ENCODE measurements at regions of chr4 and their contacts with region 1.

Region 1: DNA sequence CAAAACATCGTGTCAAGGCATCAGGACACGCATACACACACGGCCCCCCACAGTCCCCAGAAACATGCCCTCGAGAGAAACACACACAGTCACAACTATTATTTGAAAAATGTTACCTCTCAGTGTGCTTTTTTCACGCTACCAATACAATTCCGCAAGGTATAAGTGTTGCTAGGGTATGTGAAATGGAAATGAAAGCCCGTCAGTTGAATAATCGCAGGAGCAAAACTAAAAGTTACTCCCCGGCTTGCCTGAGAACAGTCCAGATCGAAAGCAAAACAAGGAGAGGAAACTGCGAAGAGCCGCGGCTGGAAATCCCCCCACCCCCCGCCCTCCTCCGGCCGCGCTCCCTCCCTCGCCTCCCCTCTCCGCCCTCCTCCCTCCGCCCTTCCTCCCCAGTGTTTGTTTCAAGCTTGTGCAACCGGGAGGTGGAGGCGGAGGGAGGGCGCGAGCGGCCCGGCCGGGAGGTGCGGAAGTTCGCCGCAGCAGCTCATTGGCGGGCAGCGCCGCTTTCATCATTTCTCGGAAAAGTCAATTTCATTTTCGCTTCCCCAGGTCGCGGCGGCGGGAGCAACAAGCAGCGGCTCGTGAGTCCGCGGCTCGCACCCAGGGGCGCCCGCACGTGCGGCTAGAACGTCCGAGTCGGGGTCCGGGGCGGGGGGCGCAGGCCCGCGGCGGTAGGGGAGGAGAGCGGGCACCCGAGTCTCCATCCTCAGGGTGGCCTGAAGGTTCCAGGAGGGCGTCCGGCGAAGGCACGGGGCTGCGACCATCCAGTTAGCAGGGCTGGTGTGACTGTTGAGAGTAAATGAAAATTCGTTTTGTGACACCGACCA is at the start of gene IRF2:
- DNase-seq: peak; percentile 97
- H3K4me3 ChIP-seq: peak within 1 kb of the TSS; percentile 89
- H3K27ac ChIP-seq: peak within 1 kb of the TSS; percentile 89
- H3K4me1 ChIP-seq: peaks cover 55% of the 10 kb centered on the region
- CTCF ChIP-seq: no peak; the same call in 1 of the 2 replicates
- total RNA-seq, gene IRF2: 29.7 and 32.3 TPM in 2 replicates

Region 2: DNA sequence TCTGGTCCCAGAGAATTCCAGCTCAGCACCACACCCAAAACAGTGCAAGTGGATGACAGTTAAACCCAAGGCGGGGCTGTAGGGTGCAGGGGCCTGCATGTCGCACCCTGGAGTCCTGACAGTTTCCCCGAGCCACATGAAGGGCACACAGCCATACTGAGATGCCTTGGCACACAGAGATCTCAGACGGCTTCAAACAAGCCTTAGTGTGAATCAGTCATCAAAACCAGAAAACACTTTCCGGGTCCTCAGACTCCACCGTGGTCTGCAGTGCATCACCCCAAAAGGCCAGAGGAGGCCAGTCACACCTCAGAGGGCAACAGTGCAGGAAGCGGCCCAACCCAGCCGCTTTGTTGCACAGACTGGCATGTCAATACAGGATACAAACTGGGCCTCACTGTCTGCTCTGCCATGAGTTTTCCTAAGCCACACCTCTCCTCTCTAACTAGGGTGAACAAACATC is 192.2 kb before region 1 on chr4:
- CTCF ChIA-PET with region 1: interaction called, 3 read pairs
- POLR2A ChIA-PET with region 1: interaction called, 12 read pairs
- intact Hi-C with region 1: loop called (anchors 1 kb)
- DNase-seq: peak; percentile 87
- H3K4me3 ChIP-seq: peak overlapping the region; percentile 50
- H3K27ac ChIP-seq: peak overlapping the region; percentile 96
- H3K4me1 ChIP-seq: peaks cover 80% of the 10 kb centered on the region
- CTCF ChIP-seq: peak; percentile 66

Region 3: DNA sequence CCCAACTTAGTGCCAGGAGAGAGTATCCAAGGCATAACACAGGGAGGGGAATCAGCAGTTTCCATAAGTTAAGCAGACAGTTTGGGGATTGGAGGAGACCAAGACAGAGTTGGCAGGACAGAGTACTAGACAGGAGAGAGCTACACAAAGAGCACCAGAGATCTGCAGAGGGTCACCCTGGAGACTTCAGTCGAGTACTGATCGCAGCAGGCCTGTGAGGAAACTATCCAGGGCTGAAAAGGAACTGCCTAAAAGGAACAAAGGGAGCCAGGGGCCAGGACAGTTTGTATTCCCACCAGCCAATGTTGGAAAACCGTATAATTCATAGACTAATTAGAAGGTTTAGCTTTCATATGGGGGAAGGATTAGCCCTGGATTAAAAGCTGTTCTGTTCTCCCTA is 176.2 kb before region 1 on chr4:
- CTCF ChIA-PET with region 1: no interaction called
- POLR2A ChIA-PET with region 1: no interaction called
- intact Hi-C with region 1: no loop called
- DNase-seq: no peak
- H3K4me3 ChIP-seq: no peak overlapping the region
- H3K27ac ChIP-seq: no peak overlapping the region
- H3K4me1 ChIP-seq: peaks cover 5% of the 10 kb centered on the region
- CTCF ChIP-seq: no peak

Region 4: DNA sequence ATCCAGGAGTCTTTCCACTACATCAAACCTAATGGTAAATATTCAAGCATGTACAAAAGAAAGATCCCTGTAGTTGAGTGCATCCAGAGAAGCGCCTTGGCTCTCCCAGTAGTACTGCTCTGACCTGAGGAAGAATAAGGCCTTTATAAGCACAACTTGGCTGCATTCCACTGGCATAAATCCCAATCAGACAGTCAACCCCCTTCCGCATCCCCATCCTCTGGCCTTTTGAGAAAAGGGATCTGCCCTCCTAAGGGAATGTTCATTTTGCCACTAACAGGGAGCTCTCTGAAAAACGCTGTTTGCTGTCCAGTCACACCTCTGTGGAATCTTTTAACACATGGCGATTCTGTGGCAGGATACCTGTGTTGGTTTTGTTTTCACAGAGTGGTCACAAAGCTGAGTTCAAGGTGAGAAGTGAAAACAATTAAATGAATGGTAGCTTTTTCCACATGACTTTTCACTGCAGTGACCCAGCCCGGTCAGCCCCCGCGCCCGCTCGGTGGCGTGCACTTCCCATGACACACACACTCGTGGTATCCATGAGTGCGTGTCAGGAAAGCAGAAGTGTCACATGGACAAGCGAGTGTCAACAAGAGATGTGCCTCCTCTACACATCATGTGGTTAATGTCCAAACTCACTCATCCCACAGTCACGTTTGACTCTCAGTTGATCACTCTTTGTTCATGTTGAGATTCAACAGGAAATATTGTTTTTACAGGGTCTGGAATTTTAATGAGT is 144.6 kb before region 1 on chr4:
- CTCF ChIA-PET with region 1: no interaction called
- POLR2A ChIA-PET with region 1: interaction called, 6 read pairs
- intact Hi-C with region 1: loop called (anchors 1 kb)
- DNase-seq: no peak
- H3K4me3 ChIP-seq: no peak overlapping the region
- H3K27ac ChIP-seq: peak overlapping the region; percentile 82
- H3K4me1 ChIP-seq: peaks cover 77% of the 10 kb centered on the region
- CTCF ChIP-seq: no peak

Region 5: DNA sequence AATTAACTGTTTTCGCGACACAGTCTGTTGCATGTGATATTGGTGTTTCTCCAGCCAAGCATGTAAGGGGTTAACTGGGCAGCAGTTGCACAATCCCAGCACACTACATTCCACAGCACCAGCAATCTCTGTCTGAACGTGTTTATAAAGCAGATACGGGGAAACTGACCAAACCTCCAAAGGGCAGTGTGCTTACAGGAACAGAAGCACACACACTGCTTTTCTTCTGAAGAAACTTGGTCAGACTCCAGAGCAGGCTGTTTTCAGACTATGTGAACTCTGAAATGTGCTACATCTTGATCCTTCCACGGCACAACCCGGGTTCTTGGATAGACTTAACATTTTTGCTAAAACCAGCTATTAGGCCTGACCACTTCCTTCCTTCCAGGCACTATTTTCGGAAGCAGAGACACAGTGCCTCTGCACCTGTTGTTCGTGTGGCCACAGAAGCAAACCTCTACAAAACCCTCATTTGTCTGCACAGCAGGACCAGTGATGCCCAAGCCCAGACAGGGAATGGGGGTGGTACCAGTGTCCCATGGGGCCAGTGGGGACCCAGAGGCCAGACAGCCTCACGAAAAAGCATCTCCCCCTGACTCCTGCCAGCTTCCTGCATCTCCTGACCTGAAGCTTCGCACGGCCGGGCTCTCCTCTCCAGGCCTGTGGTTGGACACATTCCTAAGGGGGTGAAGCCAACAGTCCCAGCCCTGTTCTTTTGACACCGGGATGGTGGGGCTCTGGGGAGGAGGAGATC is 90.2 kb before region 1 on chr4:
- CTCF ChIA-PET with region 1: no interaction called
- POLR2A ChIA-PET with region 1: interaction called, 5 read pairs
- intact Hi-C with region 1: loop called (anchors 1 kb)
- DNase-seq: peak; percentile 92
- H3K4me3 ChIP-seq: peak overlapping the region; percentile 45
- H3K27ac ChIP-seq: peak overlapping the region; percentile 29
- H3K4me1 ChIP-seq: peaks cover 70% of the 10 kb centered on the region
- CTCF ChIP-seq: no peak

Region 6: GRCh38 chr4:184649026-184649970 is 174.8 kb after region 1 on chr4 and contains the starts of genes CASP3 and PRIMPOL:
- CTCF ChIA-PET with region 1: no interaction called
- POLR2A ChIA-PET with region 1: no interaction called
- intact Hi-C with region 1: loop called (anchors 1 kb)
- DNase-seq: peak; percentile 96
- H3K4me3 ChIP-seq: peak within 1 kb of the TSS; percentile 93
- H3K27ac ChIP-seq: peak within 1 kb of the TSS; percentile 79
- H3K4me1 ChIP-seq: peaks cover 42% of the 10 kb centered on the region
- CTCF ChIP-seq: 0 out of 2 replicates have a peak, but pooled peaks have one; percentile 21
- total RNA-seq, gene CASP3: 25.8 and 29.5 TPM in 2 replicates
- total RNA-seq, gene PRIMPOL: 8.8 and 9.2 TPM in 2 replicates

Region 7: GRCh38 chr4:184664448-184665210 is 190.2 kb after region 1 on chr4:
- CTCF ChIA-PET with region 1: no interaction called
- POLR2A ChIA-PET with region 1: no interaction called
- intact Hi-C with region 1: no loop called
- DNase-seq: peak; percentile 32
- H3K4me3 ChIP-seq: no peak overlapping the region
- H3K27ac ChIP-seq: no peak overlapping the region
- H3K4me1 ChIP-seq: peaks cover 12% of the 10 kb centered on the region
- CTCF ChIP-seq: no peak

Measured in OCI-LY7 (cell line).